ENCODE measurements at regions of chr1 and their contacts with region 1.

Region 1: DNA sequence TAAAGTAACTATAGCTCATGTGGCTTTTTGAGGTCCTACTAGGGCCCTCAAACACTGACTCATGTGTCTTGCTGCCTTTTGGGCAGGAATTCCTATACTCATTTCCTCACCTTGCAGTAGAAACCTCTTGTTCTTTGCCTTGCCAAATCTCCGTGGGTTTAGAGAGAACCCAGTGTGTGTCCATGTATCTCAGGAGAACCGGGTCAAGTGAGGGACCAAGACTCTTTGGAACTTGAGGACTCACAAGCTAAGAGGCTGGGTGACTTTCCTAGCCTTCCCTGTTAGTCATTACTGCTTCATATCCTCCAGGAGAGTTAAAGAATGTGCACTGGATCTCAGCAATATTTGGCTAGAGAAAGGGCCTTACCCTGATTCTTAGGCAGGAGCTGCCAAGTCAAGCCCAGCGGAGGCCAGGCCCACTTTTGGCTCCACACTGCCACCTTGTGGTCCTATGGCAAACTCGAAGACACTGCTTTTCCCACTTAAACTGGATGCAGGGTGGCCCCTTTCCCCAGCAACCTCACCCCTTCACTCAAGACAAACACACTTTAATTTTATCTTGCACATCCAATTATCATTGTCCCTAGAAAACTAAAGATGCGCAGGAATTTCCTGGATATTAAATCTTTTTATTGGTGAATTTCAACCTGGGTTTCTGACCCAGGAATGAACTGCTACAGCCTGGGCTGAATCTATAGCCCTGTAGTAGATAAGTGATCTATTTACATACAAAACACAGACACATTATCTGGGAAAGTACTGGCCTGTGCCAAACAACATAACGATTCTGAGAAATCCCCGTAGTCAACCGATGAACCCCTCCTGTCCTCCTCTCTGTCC is 10.6 kb downstream of the AVPR1B start:
- DNase-seq: peak; percentile 53 to 86 (median 69)
- ATAC-seq: peak; percentile 73
- H3K4me3 ChIP-seq: no peak overlapping the region
- H3K4me3 Mint-ChIP-seq: no peak overlapping the region
- H3K27ac ChIP-seq: no peak overlapping the region
- H3K27ac Mint-ChIP-seq: no peak overlapping the region
- H3K4me1 ChIP-seq: no peaks in the 10 kb centered on the region
- H3K4me1 Mint-ChIP-seq: no peaks in the 10 kb centered on the region
- H3K27me3 ChIP-seq: peaks cover 0 to 3% of the 10 kb centered on the region in 2 experiments
- H3K27me3 Mint-ChIP-seq: no peaks in the 10 kb centered on the region
- CTCF ChIP-seq: peak; percentile 90

Region 2: DNA sequence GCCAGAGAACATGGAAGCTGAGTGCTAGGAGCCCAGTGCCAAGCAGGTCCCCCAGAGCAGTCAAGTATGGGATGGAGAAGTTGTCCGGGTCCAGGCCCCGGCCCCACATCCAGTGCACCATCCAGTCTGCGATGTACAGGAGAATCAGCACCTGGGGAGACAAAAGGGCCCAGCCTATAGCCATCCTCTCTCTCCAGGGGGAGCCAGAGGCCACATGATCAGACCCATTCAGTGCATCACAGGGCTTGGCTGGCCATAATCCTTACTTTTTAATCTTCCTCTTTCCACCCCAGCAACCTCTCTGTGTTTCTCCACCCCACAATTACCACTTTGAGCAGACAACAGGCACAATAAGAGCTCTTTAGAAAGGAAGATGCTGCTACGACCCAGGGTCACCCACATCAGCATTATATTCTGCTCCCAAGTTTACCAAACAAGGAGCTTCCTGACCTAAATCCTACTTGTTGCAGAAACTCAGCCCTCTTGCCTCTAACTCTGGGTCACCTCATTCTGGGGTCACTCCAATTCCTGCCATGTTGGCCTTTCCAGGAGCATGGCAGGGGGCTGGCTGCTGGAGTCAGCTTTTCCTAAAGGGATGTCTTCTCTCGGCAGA is 314.9 kb before region 1 on chr1:
- CTCF ChIA-PET with region 1: interaction called, 5 read pairs
- POLR2A ChIA-PET with region 1: no interaction called
- intact Hi-C with region 1: loop called (anchors 1 kb)
- DNase-seq: peak; percentile 44 to 79 (median 57)
- ATAC-seq: peak; percentile 91
- H3K4me3 ChIP-seq: no peak overlapping the region
- H3K4me3 Mint-ChIP-seq: no peak overlapping the region
- H3K27ac ChIP-seq: no peak overlapping the region
- H3K27ac Mint-ChIP-seq: no peak overlapping the region
- H3K4me1 ChIP-seq: no peaks in the 10 kb centered on the region
- H3K4me1 Mint-ChIP-seq: no peaks in the 10 kb centered on the region
- H3K27me3 ChIP-seq: no peaks in the 10 kb centered on the region
- H3K27me3 Mint-ChIP-seq: no peaks in the 10 kb centered on the region
- CTCF ChIP-seq: peak; percentile 82

Region 3: GRCh38 chr1:205919026-205919746 is 187.4 kb before region 1 on chr1:
- CTCF ChIA-PET with region 1: no interaction called
- POLR2A ChIA-PET with region 1: no interaction called
- intact Hi-C with region 1: loop called (anchors 1 kb)
- DNase-seq: peak; percentile 33 to 79 (median 57)
- ATAC-seq: peak; percentile 57
- H3K4me3 ChIP-seq: no peak overlapping the region
- H3K4me3 Mint-ChIP-seq: no peak overlapping the region
- H3K27ac ChIP-seq: no peak overlapping the region
- H3K27ac Mint-ChIP-seq: no peak overlapping the region
- H3K4me1 ChIP-seq: no peaks in the 10 kb centered on the region
- H3K4me1 Mint-ChIP-seq: no peaks in the 10 kb centered on the region
- H3K27me3 ChIP-seq: no peaks in the 10 kb centered on the region
- H3K27me3 Mint-ChIP-seq: peaks cover under 1% of the 10 kb centered on the region
- CTCF ChIP-seq: peak; percentile 86

Region 4: DNA sequence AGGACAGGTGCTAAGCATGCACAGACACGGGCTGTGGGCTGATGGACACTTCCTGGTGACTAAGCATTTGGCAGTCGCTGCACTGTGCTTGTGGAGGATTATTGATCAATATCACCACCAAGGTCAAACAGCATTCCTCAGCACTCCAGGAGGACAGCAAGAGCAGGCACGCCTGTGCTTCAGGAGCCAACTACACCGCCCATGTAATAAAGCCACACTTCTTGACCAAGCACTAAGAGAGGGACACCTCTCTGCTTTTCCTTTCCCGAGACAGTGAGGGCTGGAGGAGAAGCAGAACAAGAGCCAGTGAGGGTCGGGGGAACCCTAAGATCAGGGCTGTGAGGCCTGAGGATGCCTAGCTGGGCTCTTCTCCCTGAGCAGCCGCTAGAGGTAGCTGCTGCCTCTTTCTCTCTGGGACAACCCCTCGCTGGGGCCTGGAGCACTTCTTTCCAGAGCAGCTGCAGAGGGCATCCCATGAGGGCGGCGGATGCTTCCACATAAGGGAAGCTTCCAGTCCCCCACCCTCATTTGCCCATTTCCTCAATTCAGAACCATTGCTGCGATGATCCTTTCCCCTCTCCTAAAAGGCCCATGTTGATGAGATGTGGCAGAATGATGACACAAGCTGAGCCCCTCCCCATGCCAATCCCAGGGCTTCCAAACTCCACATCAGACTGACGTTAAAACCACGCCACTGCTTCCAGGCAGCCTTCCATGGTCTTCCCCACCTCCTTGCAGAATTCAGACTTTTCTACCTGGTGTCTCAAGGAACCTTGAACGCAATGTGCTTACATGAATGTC is 122.4 kb before region 1 on chr1:
- CTCF ChIA-PET with region 1: no interaction called
- POLR2A ChIA-PET with region 1: no interaction called
- intact Hi-C with region 1: loop called (anchors 1 to 5 kb)
- DNase-seq: peak in 3 of 14 experiments; percentile 10 to 42 (median 36)
- ATAC-seq: no peak
- H3K4me3 ChIP-seq: no peak overlapping the region
- H3K4me3 Mint-ChIP-seq: no peak overlapping the region
- H3K27ac ChIP-seq: no peak overlapping the region
- H3K27ac Mint-ChIP-seq: no peak overlapping the region
- H3K4me1 ChIP-seq: no peaks in the 10 kb centered on the region
- H3K4me1 Mint-ChIP-seq: no peaks in the 10 kb centered on the region
- H3K27me3 ChIP-seq: no peaks in the 10 kb centered on the region
- H3K27me3 Mint-ChIP-seq: no peaks in the 10 kb centered on the region
- CTCF ChIP-seq: no peak

Region 5: DNA sequence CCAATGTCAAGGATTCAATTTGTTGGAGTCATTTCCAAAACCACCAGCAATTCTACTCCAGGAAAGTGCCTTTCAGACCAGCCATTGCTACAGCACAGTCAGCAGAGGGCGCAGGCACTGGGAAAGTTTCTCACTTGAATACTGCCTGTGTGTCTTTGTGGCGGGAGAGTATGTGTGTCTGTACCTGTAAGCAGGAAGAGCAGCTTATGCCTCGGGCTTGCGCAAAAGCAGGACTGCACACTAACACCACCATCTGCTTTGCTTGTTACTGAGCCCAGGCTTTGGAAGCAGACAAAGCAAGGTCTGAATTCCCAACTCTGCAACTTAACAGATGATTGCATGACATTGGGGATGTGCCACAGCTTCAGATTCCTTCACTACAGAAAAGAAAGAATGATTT is 75.8 kb before region 1 on chr1:
- CTCF ChIA-PET with region 1: interaction called, 13 read pairs
- POLR2A ChIA-PET with region 1: interaction called, 10 read pairs
- intact Hi-C with region 1: loop called (anchors 1 kb)
- DNase-seq: peak; percentile 42 to 80 (median 58)
- ATAC-seq: peak; percentile 79
- H3K4me3 ChIP-seq: no peak overlapping the region
- H3K4me3 Mint-ChIP-seq: no peak overlapping the region
- H3K27ac ChIP-seq: no peak overlapping the region
- H3K27ac Mint-ChIP-seq: no peak overlapping the region
- H3K4me1 ChIP-seq: peaks cover 6% of the 10 kb centered on the region
- H3K4me1 Mint-ChIP-seq: peaks cover 19% of the 10 kb centered on the region
- H3K27me3 ChIP-seq: no peaks in the 10 kb centered on the region
- H3K27me3 Mint-ChIP-seq: peaks cover 11% of the 10 kb centered on the region
- CTCF ChIP-seq: peak; percentile 82

Region 6: GRCh38 chr1:206122725-206123124 is 16.2 kb after region 1 on chr1:
- CTCF ChIA-PET with region 1: no interaction called
- POLR2A ChIA-PET with region 1: no interaction called
- intact Hi-C with region 1: no loop called
- DNase-seq: no peak
- ATAC-seq: no peak
- H3K4me3 ChIP-seq: no peak overlapping the region
- H3K4me3 Mint-ChIP-seq: no peak overlapping the region
- H3K27ac ChIP-seq: no peak overlapping the region
- H3K27ac Mint-ChIP-seq: no peak overlapping the region
- H3K4me1 ChIP-seq: peaks cover 3% of the 10 kb centered on the region
- H3K4me1 Mint-ChIP-seq: no peaks in the 10 kb centered on the region
- H3K27me3 ChIP-seq: peaks cover 11 to 31% of the 10 kb centered on the region in 2 experiments
- H3K27me3 Mint-ChIP-seq: peaks cover 67% of the 10 kb centered on the region
- CTCF ChIP-seq: no peak

Region 7: DNA sequence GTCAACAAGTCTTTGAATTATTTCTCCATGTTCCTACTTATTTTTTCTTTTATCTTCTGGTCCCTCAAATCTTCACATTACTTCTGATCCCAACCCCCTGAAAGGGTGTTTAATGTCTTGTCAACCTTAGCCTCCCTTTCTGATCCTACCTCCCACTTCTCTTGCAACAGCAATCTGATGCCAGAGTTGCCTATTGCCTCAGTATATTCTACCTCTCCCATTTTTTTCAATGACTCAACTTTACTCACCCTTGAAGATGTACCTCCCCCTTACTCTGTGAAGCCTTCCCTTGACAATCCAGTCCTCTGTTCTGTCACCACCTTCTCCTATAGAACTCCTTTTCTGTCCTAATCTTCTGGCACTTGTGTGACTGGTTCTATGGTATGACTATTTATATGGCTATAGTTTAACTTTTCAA is 1115.4 kb after region 1 on chr1:
- CTCF ChIA-PET with region 1: no interaction called
- POLR2A ChIA-PET with region 1: no interaction called
- intact Hi-C with region 1: no loop called
- DNase-seq: no peak
- ATAC-seq: no peak
- H3K4me3 ChIP-seq: no peak overlapping the region
- H3K4me3 Mint-ChIP-seq: no peak overlapping the region
- H3K27ac ChIP-seq: no peak overlapping the region
- H3K27ac Mint-ChIP-seq: no peak overlapping the region
- H3K4me1 ChIP-seq: no peaks in the 10 kb centered on the region
- H3K4me1 Mint-ChIP-seq: peaks cover 9% of the 10 kb centered on the region
- H3K27me3 ChIP-seq: no peaks in the 10 kb centered on the region
- H3K27me3 Mint-ChIP-seq: no peaks in the 10 kb centered on the region
- CTCF ChIP-seq: no peak

Measured in CD4-positive, alpha-beta T cell (primary cell).